AG04450 (cell line): ENCODE measurements at regions of chr7 and their contacts with region 1.

Region 1: GRCh38 chr7:132077971-132078685 is 498.1 kb downstream of the PLXNA4 start:
- DNase-seq: peak; percentile 59
- H3K4me3 ChIP-seq: no peak overlapping the region
- H3K27ac ChIP-seq: peak overlapping the region; percentile 31
- H3K27me3 ChIP-seq: peaks cover 42% of the 10 kb centered on the region
- CTCF ChIP-seq: no peak

Region 2: DNA sequence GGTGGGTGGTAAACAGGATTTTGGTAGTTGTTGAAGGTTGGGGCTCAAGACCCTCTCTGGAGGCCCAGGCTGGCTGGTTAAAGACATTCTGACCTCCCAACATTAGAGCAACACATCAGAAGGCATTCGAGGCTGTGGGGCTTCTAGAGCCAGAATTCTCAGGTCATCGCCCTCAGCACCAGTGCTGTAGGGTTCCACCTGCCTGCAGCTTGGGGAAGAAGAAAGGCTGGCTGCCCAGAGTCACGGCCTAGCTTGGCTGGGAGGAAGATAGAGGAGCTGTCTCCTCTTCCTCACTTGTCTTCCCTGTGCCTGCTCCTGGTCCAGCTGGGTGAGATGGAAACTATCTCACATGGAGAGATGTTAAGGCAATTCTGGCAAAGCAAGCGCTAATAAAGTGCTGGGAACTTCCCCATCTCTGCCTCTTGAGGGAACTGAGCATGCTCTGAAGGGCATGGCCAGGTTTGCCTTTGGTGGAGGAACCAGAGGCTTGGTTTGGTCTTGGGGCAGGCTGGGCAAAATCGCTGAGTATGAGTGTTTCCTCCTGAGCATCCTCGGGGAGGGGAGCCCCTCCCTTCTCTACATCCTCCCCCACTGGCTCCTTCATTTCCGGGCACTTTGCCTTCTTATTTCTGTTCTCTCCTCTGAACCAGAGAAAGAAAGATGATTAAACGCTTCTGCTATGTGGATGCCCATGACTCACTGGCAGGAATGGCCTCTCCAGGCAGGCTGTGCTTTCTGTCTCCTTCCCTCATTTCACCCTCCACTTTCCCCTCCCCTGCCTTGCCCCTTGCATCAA is 12.7 kb before region 1 on chr7:
- CTCF ChIA-PET with region 1: interaction called, 5 read pairs
- POLR2A ChIA-PET with region 1: interaction called, 11 read pairs
- DNase-seq: peak; percentile 77
- H3K4me3 ChIP-seq: no peak overlapping the region
- H3K27ac ChIP-seq: peak overlapping the region; percentile 83
- H3K27me3 ChIP-seq: no peaks in the 10 kb centered on the region
- CTCF ChIP-seq: no peak